WTC11 (cell line): ENCODE measurements at regions of chr12 and their contacts with region 1.

Region 1: GRCh38 chr12:55707841-55708694 is at the start of gene ITGA7:
- DNase-seq: peak; percentile 97
- ATAC-seq: peak; percentile 85
- H3K4me3 Mint-ChIP-seq: peak within 1 kb of the TSS; percentile 88
- H3K27ac Mint-ChIP-seq: peak within 1 kb of the TSS; percentile 91
- H3K4me1 Mint-ChIP-seq: peaks cover 36% of the 10 kb centered on the region
- H3K27me3 Mint-ChIP-seq: peaks cover 44% of the 10 kb centered on the region
- CTCF ChIP-seq: no peak
- total RNA-seq, gene ITGA7: 77.8 to 96.2 TPM (median 80.4 TPM) in 3 replicates

Region 2: GRCh38 chr12:55554296-55554695 is 153.8 kb before region 1 on chr12:
- CTCF ChIA-PET with region 1: no interaction called
- POLR2A ChIA-PET with region 1: no interaction called
- DNase-seq: no peak
- ATAC-seq: no peak
- H3K4me3 Mint-ChIP-seq: no peak overlapping the region
- H3K27ac Mint-ChIP-seq: no peak overlapping the region
- H3K4me1 Mint-ChIP-seq: no peaks in the 10 kb centered on the region
- H3K27me3 Mint-ChIP-seq: no peaks in the 10 kb centered on the region
- CTCF ChIP-seq: no peak

Region 3: DNA sequence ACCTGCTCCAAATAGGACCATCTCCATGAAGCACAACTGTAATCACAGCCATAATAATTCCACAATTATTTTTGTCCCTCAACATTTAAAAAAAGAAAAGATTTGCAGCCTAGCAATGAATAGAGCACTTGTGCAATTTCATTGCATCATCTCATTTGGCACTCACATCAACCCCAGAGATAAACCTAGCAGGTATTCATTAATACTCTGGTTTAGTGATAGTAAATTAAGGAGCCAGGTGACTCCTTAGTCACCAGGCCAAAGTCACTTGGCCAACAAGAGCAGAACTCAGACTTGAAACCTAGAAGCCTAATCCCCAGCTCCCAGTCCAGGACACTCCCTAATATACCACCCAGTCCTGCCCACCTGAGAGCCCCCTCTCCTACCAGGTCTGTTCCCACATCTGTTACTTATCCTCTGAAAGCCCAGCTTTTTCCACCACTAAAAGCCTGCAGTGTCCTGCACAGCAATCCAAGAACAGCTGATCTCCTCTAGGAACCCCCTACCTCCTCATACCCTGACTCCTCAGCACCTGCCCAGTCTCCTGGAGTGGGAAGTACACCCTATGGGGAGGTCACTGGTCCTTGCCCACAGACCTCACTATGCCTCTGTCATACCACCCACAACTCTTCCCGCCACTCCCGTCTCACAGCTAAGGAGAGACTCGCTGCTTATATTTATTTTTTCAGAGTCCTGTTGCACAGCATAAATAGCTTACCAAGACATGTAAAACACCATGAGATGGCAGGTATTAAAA is 49.3 kb before region 1 on chr12:
- CTCF ChIA-PET with region 1: interaction called, 38 read pairs
- POLR2A ChIA-PET with region 1: no interaction called
- DNase-seq: no peak
- ATAC-seq: no peak
- H3K4me3 Mint-ChIP-seq: no peak overlapping the region
- H3K27ac Mint-ChIP-seq: no peak overlapping the region
- H3K4me1 Mint-ChIP-seq: no peaks in the 10 kb centered on the region
- H3K27me3 Mint-ChIP-seq: peaks cover 9% of the 10 kb centered on the region
- CTCF ChIP-seq: no peak

Region 4: GRCh38 chr12:55696796-55697462 is 11.1 kb before region 1 on chr12:
- CTCF ChIA-PET with region 1: interaction called, 27 read pairs
- POLR2A ChIA-PET with region 1: no interaction called
- DNase-seq: no peak
- ATAC-seq: no peak
- H3K4me3 Mint-ChIP-seq: no peak overlapping the region
- H3K27ac Mint-ChIP-seq: peak overlapping the region; percentile 32; the same call in 1 of the 2 replicates
- H3K4me1 Mint-ChIP-seq: no peaks in the 10 kb centered on the region
- H3K27me3 Mint-ChIP-seq: no peaks in the 10 kb centered on the region
- CTCF ChIP-seq: no peak

Region 5: GRCh38 chr12:55728939-55729823 is 21.1 kb after region 1 on chr12 and contains the start of gene CD63:
- CTCF ChIA-PET with region 1: interaction called, 141 read pairs
- POLR2A ChIA-PET with region 1: interaction called, 13 read pairs
- DNase-seq: peak; percentile 87
- ATAC-seq: peak; percentile 75
- H3K4me3 Mint-ChIP-seq: peak within 1 kb of the TSS; percentile 88
- H3K27ac Mint-ChIP-seq: peak within 1 kb of the TSS; percentile 75
- H3K4me1 Mint-ChIP-seq: peaks cover 31% of the 10 kb centered on the region
- H3K27me3 Mint-ChIP-seq: no peaks in the 10 kb centered on the region
- CTCF ChIP-seq: no peak
- total RNA-seq, gene CD63: 409 to 419 TPM (median 414 TPM) in 3 replicates

Region 6: DNA sequence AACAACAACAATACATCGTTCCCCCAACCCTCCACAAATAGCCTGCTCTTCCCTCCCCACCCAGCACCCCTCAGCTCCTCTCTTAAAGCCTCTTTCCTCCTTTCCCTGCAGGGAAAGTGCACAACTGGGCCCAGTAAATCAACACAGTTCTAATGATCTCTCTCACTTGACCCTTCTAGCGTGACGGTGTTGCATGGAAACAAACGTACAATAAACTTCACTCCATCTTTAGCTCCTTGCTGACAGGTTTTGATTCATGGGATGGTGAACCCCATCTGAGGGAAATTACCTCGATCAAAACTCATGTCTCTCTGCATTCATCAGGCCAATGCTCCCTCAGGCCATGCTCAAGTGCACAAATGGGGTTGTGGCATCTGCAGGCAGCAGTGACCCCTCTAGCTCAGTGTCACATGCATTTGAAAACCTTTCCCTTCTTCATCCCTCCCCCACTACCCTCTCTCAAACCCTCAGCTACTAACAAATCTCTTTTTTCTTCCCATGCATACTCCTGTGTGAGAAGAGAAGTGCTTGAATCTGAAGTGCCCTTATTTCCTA is 57.7 kb after region 1 on chr12:
- CTCF ChIA-PET with region 1: no interaction called
- POLR2A ChIA-PET with region 1: no interaction called
- DNase-seq: no peak
- ATAC-seq: no peak
- H3K4me3 Mint-ChIP-seq: no peak overlapping the region
- H3K27ac Mint-ChIP-seq: peak overlapping the region; percentile 64
- H3K4me1 Mint-ChIP-seq: peaks cover 7% of the 10 kb centered on the region
- H3K27me3 Mint-ChIP-seq: no peaks in the 10 kb centered on the region
- CTCF ChIP-seq: no peak

Region 7: GRCh38 chr12:55789171-55789570 is 81.1 kb after region 1 on chr12:
- CTCF ChIA-PET with region 1: no interaction called
- POLR2A ChIA-PET with region 1: no interaction called
- DNase-seq: no peak
- ATAC-seq: no peak
- H3K4me3 Mint-ChIP-seq: no peak overlapping the region
- H3K27ac Mint-ChIP-seq: no peak overlapping the region
- H3K4me1 Mint-ChIP-seq: no peaks in the 10 kb centered on the region
- H3K27me3 Mint-ChIP-seq: no peaks in the 10 kb centered on the region
- CTCF ChIP-seq: no peak

Region 8: DNA sequence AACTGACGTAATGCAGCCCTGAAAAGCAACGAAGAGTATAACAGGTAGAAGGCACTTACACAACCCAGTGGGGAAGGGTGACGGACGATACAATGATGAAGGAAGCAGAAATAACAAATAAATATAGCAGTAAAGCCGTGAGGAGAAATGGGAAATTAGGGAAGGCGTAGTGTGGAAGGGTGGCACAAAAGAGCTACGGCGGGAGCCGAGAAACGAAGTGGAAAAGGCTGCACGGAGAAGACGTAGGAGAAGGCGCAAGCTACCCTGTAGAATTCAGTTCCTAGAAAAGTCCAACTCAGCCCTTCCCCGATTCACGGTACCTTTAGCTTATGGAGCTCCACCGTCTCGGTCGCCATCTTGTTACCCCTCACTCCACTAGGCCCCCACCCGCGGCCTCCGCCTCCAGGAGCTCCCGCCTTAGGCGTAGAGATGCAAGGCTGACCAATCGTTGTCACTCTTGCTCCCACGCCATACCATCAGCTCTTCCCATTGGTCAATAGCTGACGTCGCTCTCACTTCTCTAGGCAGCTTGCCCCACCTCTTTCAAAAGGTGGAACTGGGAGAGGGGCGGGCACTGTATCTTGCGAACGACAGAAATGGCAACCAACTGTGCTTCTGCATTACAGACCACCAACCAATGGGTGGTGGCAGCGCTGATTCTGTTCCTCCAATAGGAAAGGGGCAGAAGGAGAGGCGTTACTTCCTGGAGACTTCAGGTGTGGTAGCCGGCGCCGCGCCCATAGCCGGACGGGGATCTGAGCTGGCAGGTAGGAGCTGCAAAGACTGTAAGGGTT is 109.5 kb after region 1 on chr12 and contains the starts of genes ORMDL2 and SARNP:
- CTCF ChIA-PET with region 1: interaction called, 10 read pairs
- POLR2A ChIA-PET with region 1: interaction called, 5 read pairs
- DNase-seq: peak; percentile 96
- ATAC-seq: peak; percentile 96
- H3K4me3 Mint-ChIP-seq: no peak within 1 kb of the TSS; the same call in none of the 2 replicates
- H3K27ac Mint-ChIP-seq: no peak within 1 kb of the TSS; the same call in 1 of the 2 replicates
- H3K4me1 Mint-ChIP-seq: peaks cover 39% of the 10 kb centered on the region
- H3K27me3 Mint-ChIP-seq: no peaks in the 10 kb centered on the region
- CTCF ChIP-seq: no peak
- total RNA-seq, gene ORMDL2: 32.9 to 37.9 TPM (median 34.8 TPM) in 3 replicates
- total RNA-seq, gene SARNP: 98.3 to 102 TPM (median 100 TPM) in 3 replicates